Activated CD4-positive, alpha-beta T cell treated with anti-CD3 and anti-CD28 coated beads for 36 hours (primary cell): ENCODE measurements at regions of chr1 and their contacts with region 1.

Region 1: DNA sequence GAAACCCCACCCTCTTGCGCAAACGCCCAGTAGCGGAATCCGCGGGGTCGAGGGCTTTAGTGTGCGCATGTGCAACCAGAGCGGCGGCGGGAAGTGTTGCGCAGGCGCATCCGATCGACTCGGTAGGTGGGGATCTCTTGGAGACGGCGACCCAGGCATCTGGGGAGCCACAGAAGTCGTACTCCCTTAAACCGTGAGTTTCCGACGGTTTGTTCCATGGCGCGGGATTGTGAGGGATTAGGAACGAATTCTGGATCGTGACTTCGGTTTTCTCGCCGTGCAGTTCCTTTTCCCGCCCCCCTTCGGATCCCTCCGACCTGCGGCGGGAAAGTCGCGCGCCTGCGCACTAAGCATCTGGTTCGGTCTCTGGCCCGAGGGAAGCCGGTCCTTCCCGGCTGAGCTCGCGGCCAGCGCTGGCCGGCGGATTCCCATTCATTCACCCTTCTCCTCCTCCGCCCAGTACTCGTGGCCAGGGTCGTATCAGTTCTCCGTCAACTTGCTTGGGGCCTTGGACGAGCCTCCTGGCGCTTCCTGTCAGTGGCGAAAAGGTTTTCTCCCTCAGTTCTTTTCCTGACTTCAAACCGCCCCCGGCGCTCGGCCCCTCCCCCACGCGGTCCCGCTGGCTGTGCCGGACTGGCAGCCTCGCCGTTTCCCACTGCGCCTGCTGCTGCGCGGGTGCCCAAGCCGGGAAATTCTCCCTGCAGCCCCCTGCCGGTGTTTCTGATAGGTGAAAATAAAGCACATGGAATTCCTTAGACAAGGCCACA is at the start of gene CDC7:
- DNase-seq: peak; percentile 93
- ATAC-seq: peak; percentile 88
- H3K4me3 Mint-ChIP-seq: no peak within 1 kb of the TSS
- H3K27ac Mint-ChIP-seq: no peak within 1 kb of the TSS
- H3K4me1 Mint-ChIP-seq: peaks cover 25% of the 10 kb centered on the region
- H3K27me3 Mint-ChIP-seq: no peaks in the 10 kb centered on the region
- total RNA-seq, gene CDC7: 31.1 to 32.0 TPM

Region 2: DNA sequence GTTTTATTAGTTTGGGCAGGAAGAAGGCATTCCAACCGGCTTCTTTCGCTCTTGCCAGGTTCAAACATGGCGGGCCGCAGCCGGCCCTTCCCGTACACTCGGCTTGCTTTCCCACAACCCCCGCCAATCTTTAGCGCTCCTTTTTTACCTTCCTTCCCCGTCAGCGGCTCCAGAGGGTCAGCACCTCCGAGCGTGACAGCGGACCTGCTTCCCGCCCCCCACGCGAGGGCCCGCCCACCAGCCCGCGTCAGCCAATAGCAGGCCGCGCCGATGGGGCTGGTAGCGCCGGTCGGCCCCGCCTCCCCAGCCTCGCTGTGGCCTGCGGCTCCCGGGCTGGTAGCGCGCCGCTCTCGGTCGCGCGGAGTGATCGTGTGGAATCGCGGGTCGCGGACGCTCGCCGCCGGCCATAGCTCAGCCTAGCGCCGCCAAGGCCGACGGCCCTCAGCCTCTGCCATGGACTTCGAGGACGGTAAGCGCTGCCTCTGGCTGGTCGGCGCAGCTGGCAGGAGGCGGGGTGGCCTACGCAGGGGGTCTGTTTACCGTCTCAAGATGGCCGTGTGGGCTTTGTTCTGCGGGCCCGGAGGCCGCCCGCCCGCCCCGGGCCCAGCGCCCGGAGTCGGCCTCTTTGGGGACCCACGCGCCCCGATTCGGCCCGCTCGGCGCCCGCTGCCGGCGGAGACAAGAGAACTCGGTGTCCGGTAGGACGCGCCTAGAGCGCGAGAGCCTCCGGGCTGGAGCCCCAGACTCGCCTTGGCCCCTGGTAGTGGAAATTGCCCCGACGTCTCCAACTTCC is 1505.9 kb before region 1 on chr1 and contains the start of gene ZNF326:
- CTCF ChIA-PET with region 1: no interaction called
- POLR2A ChIA-PET with region 1: no interaction called
- intact Hi-C with region 1: loop called in 1 of 2 experiments (anchors 5 kb)
- DNase-seq: peak; percentile 97
- ATAC-seq: peak; percentile 95
- H3K4me3 Mint-ChIP-seq: peak within 1 kb of the TSS; percentile 94
- H3K27ac Mint-ChIP-seq: peak within 1 kb of the TSS; percentile 92
- H3K4me1 Mint-ChIP-seq: peaks cover 42% of the 10 kb centered on the region
- H3K27me3 Mint-ChIP-seq: no peaks in the 10 kb centered on the region
- total RNA-seq, gene ZNF326: 19.4 to 20.5 TPM

Region 3: GRCh38 chr1:91282695-91283420 is 218.1 kb before region 1 on chr1:
- CTCF ChIA-PET with region 1: interaction called, 3 read pairs
- POLR2A ChIA-PET with region 1: no interaction called
- intact Hi-C with region 1: loop called (anchors 5 kb)
- DNase-seq: peak; percentile 64
- ATAC-seq: no peak
- H3K4me3 Mint-ChIP-seq: no peak overlapping the region
- H3K27ac Mint-ChIP-seq: no peak overlapping the region
- H3K4me1 Mint-ChIP-seq: no peaks in the 10 kb centered on the region
- H3K27me3 Mint-ChIP-seq: peaks cover 5% of the 10 kb centered on the region

Region 4: GRCh38 chr1:91673613-91674012 is 172.7 kb after region 1 on chr1:
- CTCF ChIA-PET with region 1: no interaction called
- POLR2A ChIA-PET with region 1: no interaction called
- intact Hi-C with region 1: loop called in 1 of 2 experiments (anchors 2 kb)
- DNase-seq: no peak
- ATAC-seq: no peak
- H3K4me3 Mint-ChIP-seq: no peak overlapping the region
- H3K27ac Mint-ChIP-seq: peak overlapping the region; percentile 84
- H3K4me1 Mint-ChIP-seq: peaks cover 34% of the 10 kb centered on the region
- H3K27me3 Mint-ChIP-seq: no peaks in the 10 kb centered on the region

Region 5: DNA sequence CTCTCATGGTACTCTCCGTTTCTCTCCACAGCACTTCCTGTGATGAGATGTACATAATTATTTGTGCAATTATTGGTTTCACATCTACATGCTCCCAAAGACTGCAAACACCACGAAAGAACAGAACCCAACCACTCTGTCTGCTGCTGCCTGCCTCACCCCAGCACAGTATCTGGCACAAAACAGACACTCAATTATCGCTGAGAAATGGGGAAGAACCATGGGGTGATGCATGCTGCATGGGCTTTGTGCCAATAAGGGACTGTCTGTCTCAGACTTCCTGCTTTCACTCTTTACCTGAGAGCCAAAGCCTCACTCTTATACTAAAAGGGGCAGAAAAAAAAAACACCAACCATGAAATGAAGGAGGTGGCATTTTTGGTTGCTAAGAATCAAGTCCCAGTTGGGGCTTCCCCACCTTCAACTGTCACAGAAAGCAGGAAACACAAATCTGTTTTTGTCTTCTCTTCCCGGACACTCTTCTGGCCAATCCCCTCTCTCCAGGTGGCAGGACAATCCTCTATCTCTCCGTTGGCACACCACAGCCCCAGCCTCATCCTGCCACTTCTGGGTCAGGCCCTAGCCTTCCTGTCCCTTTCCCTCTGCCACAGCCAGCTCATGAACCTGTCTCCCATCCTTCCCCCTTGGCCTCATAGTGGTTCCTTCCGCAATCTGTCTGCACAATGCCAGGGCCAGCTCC is 303.1 kb after region 1 on chr1:
- CTCF ChIA-PET with region 1: no interaction called
- POLR2A ChIA-PET with region 1: no interaction called
- intact Hi-C with region 1: loop called (anchors 2 kb)
- DNase-seq: peak; percentile 86
- ATAC-seq: peak; percentile 80
- H3K4me3 Mint-ChIP-seq: peak overlapping the region; percentile 56
- H3K27ac Mint-ChIP-seq: peak overlapping the region; percentile 90
- H3K4me1 Mint-ChIP-seq: peaks cover 39% of the 10 kb centered on the region
- H3K27me3 Mint-ChIP-seq: peaks cover 1% of the 10 kb centered on the region

Region 6: DNA sequence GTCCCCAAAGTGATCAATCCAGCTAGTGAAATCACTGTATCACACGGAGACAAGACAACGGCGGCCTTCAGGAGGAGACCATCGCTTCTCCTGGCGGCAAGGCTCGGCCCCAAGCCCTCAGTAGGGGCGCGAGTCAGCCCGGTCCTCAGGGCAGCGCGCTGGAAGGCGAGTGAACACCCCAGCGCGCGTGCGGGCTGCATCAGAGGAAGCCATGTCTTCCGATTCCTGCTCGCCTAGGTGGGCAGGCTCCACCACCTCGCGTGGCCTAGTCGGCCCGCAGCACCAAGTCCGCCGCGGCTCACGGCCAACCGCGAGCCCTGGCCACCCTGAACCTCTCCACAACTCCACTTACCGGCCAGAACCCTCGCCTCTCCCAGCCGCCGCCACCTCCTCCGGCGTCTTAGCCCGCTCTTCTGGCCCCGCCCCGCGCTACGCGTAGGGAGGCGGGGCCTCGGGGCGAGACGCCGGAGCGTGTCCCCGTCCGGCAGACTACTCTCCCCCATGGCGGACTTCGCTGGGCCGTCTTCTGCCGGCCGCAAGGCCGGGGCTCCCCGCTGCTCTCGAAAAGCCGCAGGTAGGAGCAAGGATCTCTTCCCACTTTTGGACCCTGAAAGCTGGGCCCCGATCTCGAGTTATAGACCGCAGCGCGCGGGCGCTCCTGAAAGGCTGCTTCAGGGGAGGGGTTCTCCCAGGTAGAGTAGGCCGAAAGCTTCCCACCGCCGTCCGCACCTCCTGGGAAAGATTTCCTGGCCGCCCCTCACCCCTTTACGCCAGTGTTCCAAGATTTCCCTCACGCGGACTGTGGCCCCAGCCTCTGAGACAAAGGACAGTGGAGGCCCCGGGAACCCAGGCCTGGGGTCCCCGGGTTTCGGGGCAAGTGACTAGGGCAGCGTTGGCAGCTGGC is 797.9 kb after region 1 on chr1 and contains the starts of genes GLMN and RPAP2:
- CTCF ChIA-PET with region 1: no interaction called
- POLR2A ChIA-PET with region 1: no interaction called
- intact Hi-C with region 1: loop called in 1 of 2 experiments (anchors 2 kb)
- DNase-seq: peak; percentile 83
- ATAC-seq: peak; percentile 98
- H3K4me3 Mint-ChIP-seq: peak within 1 kb of the TSS; percentile 84
- H3K27ac Mint-ChIP-seq: peak within 1 kb of the TSS; percentile 94
- H3K4me1 Mint-ChIP-seq: peaks cover 31% of the 10 kb centered on the region
- H3K27me3 Mint-ChIP-seq: no peaks in the 10 kb centered on the region
- total RNA-seq, gene GLMN: 10.8 to 17.6 TPM
- total RNA-seq, gene RPAP2: 33.4 to 39.0 TPM